Body of pancreas (tissue), 4 donors: ENCODE measurements at regions of chr14 and their contacts with region 1.

Region 1: DNA sequence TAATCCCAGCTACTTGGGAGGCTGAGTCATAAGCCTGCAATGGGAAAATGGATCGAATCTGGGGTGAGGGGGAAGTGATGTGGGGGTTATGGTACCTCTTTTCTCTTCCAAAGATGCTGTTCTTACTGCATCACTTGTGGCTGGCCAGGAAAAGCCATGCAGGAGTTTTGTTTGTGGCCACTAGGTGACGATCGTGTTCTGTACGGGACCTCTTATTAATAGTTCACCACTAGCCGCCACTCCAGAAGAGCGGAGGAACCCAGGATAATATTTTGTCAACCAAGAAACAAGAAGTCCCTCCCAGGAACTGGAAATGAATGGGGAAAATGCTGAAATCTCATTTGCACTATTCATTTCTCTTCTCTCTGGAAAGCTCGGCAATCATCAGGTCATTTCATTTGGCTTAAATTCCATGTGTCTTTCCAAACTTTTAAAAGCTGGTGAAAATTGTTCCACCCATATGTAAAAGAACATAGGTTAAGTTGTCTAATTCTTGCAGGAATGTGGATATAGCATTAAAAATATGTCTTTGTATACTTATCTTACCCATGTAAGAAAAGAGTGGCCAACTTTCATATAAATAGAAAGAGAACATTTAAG is 8.9 kb downstream of the GPR65 start:
- DNase-seq: peak; percentile 76 to 87 (median 78)
- ATAC-seq: peak; percentile 97
- H3K4me3 ChIP-seq: no peak overlapping the region
- H3K27ac ChIP-seq: no peak overlapping the region
- H3K4me1 ChIP-seq: no peaks in the 10 kb centered on the region
- H3K27me3 ChIP-seq: no peaks in the 10 kb centered on the region
- CTCF ChIP-seq: peak; percentile 92 to 98 (median 94)
- POLR2A ChIP-seq: no peak

Region 2: DNA sequence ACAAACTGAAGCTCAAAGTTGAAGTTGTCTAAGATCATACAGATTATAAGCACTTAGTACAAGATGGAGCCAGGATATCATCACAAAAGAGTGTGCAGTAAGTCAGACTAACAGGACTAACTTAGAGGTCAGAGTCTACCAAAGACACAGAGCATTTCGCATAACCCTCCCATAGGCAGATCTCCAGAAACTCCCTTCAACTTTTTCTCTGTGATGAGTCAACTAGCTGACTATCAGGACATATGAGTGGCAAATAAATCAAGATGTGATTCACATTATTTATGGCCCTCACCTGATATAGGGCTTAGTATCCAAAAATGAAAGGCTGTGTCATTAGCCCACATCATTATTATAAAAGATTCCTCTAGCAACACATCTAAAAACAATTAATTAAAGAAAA is 505.5 kb before region 1 on chr14:
- intact Hi-C with region 1: no loop called
- DNase-seq: no peak
- ATAC-seq: no peak
- H3K4me3 ChIP-seq: no peak overlapping the region
- H3K27ac ChIP-seq: no peak overlapping the region
- H3K4me1 ChIP-seq: no peaks in the 10 kb centered on the region
- H3K27me3 ChIP-seq: no peaks in the 10 kb centered on the region
- CTCF ChIP-seq: no peak
- POLR2A ChIP-seq: no peak

Region 3: DNA sequence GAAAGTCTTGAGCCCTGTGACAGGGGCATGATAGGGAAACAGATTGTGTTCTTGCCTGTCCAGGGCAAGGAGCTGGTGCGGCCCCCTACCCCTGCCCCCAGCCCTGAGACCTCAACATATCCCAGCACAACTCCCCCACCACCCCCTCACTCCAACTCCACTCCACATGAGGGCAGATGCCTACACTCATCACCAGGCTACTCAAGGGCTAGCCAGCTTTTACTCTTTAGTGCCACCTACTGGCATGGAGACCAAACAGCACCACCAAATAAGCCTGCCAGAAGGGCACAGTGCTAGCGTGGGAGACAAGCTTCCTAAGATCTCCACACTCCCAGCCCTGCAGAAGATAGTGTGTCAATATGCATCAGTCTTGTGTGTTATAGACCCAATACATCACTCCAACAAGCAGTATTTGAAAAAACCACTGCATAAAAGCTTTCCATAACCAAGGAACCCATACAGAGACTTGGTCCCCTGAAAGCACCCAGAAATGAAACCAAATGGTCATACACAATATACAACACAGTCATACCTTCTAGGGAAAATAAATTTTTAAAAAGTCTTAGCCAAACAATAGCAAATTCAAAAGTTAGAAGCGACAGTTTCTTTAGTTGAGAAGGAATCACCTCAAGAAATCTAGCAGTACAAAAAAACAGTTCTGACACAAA is 154.8 kb after region 1 on chr14:
- intact Hi-C with region 1: loop called (anchors 10 kb)
- DNase-seq: peak; percentile 48 to 58 (median 52)
- ATAC-seq: peak; percentile 80
- H3K4me3 ChIP-seq: no peak overlapping the region
- H3K27ac ChIP-seq: no peak overlapping the region
- H3K4me1 ChIP-seq: no peaks in the 10 kb centered on the region
- H3K27me3 ChIP-seq: no peaks in the 10 kb centered on the region
- CTCF ChIP-seq: peak; percentile 57 to 74 (median 70)
- POLR2A ChIP-seq: no peak